Endothelial cell of umbilical vein (primary cell): ENCODE measurements at regions of chr3 and their contacts with region 1.

Region 1: DNA sequence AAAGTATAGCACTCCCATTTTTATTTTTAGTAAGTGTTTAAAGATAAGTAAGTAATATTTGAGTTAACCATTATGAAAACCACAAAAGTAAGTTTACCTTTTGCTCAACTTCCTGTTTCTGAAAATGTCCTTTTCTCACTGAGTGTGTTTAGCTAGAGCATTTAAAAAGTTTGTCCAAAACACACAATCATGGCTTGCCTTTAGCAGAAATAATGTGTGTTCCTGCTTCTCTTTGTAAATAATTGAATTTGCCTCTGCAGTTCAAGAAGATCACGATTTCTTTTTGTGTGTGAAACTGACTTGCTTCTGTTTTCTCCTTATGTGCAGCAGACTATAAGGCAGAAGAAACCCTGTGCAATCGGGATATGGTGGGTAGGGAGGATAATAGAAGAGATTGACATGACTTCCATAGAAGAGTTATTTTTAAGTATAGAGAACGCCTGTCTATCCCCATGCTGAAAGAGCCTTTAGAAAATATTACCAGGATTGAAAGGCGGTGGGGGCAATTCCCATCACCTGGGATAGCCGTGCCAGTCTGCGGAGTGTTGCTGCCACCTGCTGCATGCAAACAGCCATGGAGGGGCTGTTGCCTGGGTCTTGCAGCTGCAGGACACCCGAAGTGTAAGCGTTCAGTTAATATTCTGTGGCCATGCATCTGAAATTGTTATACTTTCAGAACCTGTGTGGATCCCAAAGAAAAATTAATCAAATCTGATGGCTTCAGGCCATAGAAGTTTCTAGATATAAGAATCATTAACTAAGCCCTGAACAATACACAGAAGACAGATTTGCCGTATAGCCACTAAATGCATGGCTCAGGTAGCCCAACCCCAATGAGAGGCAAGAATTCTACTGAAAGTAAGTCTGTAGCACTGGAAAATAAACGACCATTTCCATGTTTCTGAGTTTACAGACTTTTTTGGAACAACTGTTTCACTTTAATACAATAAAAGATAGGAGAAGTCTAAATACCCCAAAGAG is 2.4 kb upstream of the CD96 start:
- DNase-seq: no peak
- H3K4me3 ChIP-seq: no peak overlapping the region
- H3K27ac ChIP-seq: no peak overlapping the region
- H3K4me1 ChIP-seq: no peaks in the 10 kb centered on the region
- H3K27me3 ChIP-seq: no peaks in the 10 kb centered on the region
- CTCF ChIP-seq: peak in 1 of 2 donors; percentile 31
- POLR2A ChIP-seq: no peak

Region 2: DNA sequence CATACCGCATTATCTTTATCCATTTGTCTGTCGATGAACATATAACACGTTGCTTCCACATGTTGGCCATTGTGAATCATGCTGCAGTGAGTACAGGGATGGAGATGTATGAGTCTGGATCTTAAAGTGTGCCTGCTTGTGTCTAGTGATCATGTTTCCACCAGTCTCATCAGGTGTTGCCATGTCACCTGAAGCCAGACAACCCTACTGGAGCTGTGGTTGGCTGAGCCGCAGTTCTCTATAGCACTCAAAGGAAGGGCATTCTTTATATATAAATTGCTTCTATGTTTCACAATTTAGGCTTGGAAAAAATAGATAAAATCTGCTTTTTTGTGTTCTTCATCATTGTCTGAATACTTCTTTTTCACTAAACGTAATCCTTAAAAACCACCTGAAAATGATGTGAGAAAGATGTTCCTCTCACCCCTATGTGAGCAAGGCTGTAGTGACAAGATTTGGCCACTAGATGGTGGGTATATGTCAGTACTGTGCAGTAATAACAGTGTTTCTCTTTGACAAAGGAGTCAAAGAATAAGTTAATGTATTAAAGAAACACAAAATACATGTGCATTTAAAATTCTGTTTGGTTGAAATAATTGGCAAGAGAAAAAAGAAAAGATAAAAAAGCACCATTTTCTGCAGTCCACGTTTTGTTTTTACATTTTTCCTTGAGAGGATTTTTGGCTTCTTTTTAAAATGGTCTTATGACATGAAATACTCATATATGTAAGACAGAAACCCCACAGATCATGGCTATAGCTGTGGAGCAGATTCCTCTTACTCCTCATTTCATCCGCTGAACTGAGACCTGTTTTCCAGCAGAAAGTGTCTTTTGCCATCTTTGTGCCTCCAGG is 1807.8 kb before region 1 on chr3:
- CTCF ChIA-PET with region 1: no interaction called
- POLR2A ChIA-PET with region 1: no interaction called
- dilution Hi-C with region 1: no loop called
- intact Hi-C with region 1: loop called (anchors 10 kb)
- DNase-seq: peak; percentile 51
- H3K4me3 ChIP-seq: no peak overlapping the region
- H3K27ac ChIP-seq: no peak overlapping the region
- H3K4me1 ChIP-seq: no peaks in the 10 kb centered on the region
- H3K27me3 ChIP-seq: no peaks in the 10 kb centered on the region
- CTCF ChIP-seq: peak; percentile 50
- POLR2A ChIP-seq: no peak